Posterior vena cava (tissue), 2 donors: ENCODE measurements at regions of chr1 and their contacts with region 1.

Region 1: DNA sequence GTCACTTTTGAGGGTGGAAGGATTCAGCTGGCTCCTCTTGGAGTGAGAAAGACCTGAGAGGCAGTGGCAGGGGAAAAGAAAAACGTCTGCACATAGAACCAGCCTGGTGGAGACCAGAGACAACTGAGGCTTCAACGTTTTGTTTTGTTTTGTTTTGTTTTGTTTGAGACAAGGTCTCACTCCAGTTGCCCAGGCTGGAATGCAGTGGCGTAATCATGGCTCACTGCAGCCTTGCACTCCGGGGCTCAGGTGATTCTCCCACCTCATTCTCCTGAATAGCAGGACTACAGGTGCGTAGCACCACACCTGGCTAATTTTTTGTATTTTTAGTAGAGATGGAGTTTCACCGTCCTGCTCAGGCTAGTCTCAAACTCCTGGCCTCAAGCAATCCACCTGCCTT is 12.3 kb downstream of the SHISAL2A start:
- DNase-seq: no peak

Region 2: DNA sequence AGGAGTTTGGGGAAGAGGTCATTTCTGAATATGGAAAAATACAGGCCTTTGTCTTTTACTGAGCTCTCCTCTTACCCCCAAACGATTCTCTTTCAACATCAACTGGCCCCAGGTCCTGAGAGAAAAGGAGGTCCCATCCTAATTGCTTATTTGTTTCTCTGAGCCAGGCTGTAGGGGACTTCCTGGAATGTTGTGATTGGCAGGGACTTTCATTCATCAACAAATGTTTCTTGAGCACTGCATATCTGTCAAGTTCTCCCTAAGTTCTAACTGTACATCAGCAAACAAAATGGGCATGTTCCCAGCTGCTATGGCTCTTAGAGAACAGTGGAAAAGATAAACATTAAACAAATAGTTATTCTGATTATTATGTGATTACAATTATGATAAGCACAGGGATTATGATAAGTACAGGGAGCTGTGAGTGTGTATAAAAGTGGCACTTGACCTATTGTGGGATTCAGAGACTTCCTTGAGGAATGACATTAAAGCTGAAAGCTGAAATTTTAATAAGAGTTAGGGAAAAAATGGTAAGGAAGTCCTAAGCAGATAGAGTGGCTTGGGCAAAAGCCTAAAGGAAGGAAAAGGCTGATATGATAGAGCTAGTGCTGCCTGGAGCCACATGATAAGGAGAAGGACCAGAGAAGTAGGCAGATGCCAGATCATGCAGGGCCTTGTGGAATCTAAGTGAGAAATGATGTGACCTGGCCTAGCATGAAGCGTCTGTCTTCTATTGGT is 31.5 kb before region 1 on chr1:
- intact Hi-C with region 1: loop called in 1 of 2 experiments (anchors 2 kb)
- DNase-seq: no peak

Region 3: DNA sequence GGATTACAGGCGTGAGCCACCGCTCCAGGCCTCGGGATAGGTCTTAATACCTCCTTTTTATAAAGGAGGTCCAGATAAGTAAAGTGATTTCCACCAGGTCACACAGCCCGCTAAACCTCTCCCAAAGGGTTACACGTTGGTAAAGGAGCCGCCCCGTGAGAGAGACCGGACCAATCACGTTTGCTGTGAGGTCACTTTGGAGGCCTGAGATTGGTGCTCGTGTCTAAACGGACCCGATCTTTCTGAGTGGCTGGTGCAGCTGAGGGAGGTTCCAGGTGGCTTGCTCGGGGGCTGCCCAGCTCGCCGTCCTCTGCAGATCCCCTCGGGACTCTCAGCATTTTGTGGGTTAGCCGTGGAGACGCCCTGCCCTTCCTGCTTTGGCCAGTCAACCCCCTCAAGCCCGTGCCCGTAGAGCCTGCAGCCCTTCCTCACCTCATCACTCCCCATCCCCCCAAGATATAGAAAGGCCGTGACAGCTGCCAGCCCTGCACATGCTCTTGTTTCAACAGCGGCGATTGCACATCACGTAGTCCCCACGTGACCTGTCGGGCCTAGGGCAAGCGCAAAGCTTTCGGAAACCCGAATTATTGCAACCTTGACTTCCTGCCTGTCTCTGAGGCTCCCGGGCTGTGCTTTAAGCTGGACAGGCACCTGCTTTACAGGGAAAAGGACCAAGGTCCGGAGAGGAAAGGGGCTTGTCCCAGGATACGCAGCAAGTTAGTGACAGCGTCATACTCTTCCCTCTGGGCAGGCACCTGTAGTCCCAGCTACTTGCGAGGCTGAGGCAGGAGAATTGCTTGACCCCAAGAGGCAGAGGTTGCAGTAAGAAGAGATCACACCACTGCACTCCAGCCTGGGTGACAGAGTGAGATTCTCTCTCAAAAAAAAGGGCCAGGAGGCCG is 57.9 kb after region 1 on chr1:
- intact Hi-C with region 1: no loop called
- DNase-seq: peak; percentile 95